ENCODE measurements at regions of chrX and their contacts with region 1.

Region 1: DNA sequence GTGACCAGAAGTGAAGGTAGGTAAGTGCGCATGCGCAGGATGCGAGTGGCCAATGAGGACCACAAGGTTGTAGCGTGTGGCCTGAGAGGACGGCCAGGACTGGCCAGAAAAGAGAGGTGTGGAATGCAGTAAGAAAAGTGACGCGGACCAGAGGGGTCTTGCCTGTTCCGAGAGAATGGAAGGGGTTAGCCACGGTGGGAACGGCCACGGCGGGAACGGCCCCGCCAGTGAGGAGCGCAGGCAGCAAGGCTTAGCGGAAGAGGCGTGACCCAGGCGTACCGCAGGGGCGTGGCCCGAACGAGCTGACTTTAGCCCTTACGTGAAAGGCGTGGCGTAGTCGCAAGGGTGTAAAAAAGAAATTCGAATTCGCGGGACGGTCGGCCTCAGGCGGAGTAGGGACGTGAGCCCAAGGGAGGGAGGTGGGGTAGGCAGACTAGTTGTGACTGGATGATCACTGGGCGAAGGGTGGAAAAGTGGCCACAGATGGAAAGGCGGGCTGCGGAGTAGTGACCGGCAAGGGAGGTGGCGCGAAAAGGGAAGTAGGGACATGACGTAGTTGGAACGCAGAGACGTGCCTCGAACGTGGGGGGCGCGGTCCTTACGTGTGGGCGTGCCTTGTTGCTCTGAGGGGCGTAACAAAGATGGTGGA is 10.4 kb upstream of the CLTRN start:
- DNase-seq: peak; percentile 79
- H3K4me3 Mint-ChIP-seq: no peak overlapping the region
- H3K27ac Mint-ChIP-seq: no peak overlapping the region
- H3K4me1 Mint-ChIP-seq: peaks cover 8% of the 10 kb centered on the region
- H3K27me3 Mint-ChIP-seq: peaks cover 2% of the 10 kb centered on the region

Region 2: DNA sequence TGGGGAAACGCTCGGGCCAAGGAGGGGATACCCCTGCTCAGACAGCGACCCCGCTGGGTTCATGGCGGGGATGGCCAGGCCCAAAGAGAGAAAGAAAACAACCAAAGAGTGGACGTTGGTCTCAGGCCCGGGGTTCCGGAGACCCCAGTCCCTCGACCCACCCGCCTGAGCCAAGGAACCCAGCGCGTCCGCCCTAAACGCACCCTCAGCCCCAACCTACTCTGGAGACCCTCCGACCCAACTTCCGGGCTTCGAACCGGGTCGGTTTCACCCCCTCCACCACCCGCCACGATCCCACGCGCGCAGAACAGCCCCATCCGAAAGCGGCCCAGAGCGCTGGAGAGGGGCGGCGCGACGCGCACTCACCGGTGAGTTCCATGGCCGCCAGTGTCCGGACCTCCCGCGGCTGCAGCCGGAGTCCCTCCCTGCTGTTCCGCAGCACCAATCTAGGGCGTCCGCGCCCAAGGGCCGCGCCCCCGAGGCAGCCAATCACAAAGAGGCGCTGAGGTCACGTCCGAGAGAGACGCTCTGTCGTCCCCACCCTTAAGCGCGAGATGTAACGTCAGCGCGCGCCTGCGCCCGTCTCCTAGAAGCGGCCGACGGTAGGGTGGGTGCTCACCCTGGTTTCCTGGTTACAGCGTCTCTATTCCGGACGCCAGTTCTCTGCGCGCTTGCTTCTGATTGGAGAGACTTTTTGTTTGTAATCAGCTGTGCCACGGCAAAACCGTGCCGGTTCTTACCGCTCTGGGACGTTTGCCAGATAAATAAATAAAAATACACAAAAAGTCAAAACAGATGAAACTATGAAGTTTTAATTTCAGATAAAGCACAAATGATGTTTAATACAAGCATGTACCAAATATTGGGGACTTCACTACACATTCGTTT is 339.6 kb before region 1 on chrX and contains the start of gene PIGA:
- intact Hi-C with region 1: loop called (anchors 1 kb)
- DNase-seq: peak; percentile 89
- H3K4me3 Mint-ChIP-seq: peak within 1 kb of the TSS; percentile 91
- H3K27ac Mint-ChIP-seq: peak within 1 kb of the TSS; percentile 88
- H3K4me1 Mint-ChIP-seq: peaks cover 14% of the 10 kb centered on the region
- H3K27me3 Mint-ChIP-seq: no peaks in the 10 kb centered on the region
- total RNA-seq, gene PIGA: 23.9 and 25.4 TPM in 2 replicates

Region 3: DNA sequence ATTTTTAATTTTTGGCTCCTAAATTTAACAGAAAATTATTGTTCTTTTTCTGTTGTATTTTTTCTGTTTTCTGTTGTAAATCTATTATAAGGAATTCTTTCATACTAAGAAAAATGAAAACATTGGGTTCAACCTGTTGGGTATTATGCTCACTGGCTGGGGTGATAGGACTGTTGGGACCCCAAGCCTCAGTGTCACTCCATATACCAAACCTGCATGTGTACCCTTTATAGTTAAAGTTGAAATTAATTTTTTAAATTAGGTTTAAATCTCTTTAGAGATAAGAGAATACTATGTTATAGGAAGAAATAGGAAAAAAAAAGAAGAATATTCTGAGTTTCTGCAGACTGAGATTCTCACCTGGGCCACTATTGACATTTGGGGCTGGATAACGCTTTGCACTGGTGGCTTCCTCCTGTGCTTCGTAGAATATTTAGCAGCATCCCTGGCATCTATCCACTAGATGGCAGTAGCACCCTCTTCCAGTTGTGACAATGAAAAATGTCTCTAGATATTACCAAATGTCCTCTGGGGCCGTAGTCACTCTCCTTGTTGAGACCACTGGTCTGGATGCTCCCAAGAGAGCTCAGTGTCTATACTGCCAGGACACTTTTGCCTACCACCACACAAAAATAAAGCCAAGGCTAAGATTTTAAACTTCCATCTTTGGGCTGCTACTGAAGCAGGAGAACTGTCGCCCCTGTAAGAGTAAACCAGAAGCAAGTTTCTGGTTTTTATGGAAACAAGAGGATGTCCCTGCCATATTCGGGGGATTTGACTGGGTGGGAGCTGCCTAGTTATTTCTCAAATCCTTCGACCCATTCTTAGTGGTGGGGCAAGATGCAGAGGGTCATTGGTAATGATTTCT is 12.1 kb after region 1 on chrX:
- intact Hi-C with region 1: loop called (anchors 1 kb)
- DNase-seq: peak; percentile 27
- H3K4me3 Mint-ChIP-seq: no peak overlapping the region
- H3K27ac Mint-ChIP-seq: no peak overlapping the region
- H3K4me1 Mint-ChIP-seq: peaks cover 9% of the 10 kb centered on the region
- H3K27me3 Mint-ChIP-seq: no peaks in the 10 kb centered on the region

Region 4: DNA sequence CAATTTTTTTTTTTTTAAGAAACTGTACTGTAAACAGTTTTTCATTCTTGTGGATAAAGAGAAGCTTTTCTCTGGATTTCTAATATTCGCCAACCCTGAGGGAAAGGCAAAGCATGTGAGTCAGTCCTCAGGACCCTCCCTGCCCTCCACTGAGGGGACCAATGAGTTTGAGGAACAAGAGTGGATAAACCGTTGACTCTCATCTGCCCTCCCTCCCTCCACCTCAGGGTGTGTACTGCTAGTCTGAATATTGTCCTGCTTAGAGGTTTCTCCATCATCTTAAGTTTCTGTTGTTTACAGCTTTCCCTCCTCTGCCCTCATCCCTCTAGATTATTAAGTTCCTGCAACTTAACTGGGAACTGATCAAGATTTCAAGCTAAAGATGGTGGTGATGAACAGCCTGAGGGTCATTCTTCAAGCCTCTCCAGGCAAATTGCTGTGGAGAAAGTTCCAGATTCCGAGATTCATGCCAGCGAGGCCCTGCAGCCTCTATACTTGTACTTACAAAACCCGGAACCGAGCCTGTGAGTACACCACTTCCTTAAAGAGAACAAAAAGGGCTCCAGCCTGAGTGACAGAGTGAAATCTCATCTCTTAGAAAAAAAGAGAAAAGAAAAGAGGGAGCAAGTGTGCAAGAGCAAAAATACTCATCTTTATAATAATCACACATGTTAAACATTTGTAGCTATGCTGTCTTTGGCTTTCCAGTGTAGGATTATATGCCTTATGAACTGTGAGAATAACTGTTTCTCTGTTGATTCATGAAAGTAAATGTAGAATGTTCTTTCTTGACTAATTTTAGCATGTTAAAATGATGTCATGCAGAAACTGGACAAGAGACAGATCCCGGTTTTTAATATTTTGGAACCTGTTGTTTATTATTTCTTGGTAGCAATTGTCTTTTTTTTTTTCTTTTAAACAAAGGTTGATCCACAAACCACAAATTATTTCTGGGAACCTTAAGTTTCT is 75.0 kb after region 1 on chrX:
- intact Hi-C with region 1: loop called (anchors 2 kb)
- DNase-seq: no peak
- H3K4me3 Mint-ChIP-seq: peak overlapping the region; percentile 45
- H3K27ac Mint-ChIP-seq: peak overlapping the region; percentile 97
- H3K4me1 Mint-ChIP-seq: peaks cover 39% of the 10 kb centered on the region
- H3K27me3 Mint-ChIP-seq: no peaks in the 10 kb centered on the region

Region 5: DNA sequence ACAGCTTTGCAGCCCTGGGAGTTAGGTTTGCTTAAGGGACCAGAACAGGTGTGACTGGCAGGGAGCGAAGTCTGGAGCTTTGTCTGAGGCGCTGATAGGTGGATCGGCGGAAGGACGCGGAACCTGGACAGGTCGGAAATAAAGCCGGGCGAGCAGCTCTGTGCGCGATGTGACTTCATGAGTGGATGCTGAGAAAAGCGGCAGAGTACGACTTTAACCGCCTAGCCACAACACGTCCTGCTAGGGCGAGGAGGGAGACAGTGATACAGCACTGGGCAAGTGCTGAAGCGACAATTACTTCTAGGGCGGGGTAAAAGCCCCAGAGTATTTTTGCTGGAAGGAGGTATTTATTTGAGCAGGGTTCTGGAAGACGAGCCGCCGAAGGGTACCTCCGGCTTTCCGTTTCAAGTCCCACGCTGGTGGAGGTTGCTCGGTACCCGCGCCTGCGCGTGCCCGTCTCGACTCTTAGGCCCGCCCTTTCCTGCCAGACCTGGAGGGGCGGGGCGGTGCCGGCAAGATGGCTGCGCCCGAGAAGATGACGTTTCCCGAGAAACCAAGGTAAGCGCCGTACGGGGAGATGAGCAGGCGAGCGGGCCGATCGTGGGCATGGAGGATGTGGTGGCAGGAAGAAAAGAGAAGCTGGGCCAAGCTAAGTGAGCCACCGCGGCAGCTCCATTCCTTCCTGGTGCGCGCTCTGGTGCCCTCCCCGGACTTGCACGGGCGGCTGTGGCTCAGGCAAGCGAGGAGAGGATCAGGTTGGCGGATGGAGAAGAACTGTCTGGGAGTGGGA is 115.2 kb after region 1 on chrX and contains the start of gene ZRSR2:
- intact Hi-C with region 1: loop called (anchors 1 kb)
- DNase-seq: peak; percentile 83
- H3K4me3 Mint-ChIP-seq: no peak within 1 kb of the TSS
- H3K27ac Mint-ChIP-seq: no peak within 1 kb of the TSS
- H3K4me1 Mint-ChIP-seq: peaks cover 18% of the 10 kb centered on the region
- H3K27me3 Mint-ChIP-seq: no peaks in the 10 kb centered on the region
- total RNA-seq, gene ZRSR2: 20.6 and 22.1 TPM in 2 replicates

Region 6: GRCh38 chrX:16719334-16720084 is 1044.5 kb after region 1 on chrX and contains the start of gene SYAP1:
- intact Hi-C with region 1: loop called (anchors 2 kb)
- DNase-seq: peak; percentile 89
- H3K4me3 Mint-ChIP-seq: peak within 1 kb of the TSS; percentile 92
- H3K27ac Mint-ChIP-seq: peak within 1 kb of the TSS; percentile 94
- H3K4me1 Mint-ChIP-seq: peaks cover 16% of the 10 kb centered on the region
- H3K27me3 Mint-ChIP-seq: no peaks in the 10 kb centered on the region
- total RNA-seq, gene SYAP1: 19.5 and 19.7 TPM in 2 replicates